ENCODE measurements at regions of chr16 and their contacts with region 1.

Region 1: GRCh38 chr16:5347561-5347960 is 250.0 kb upstream of the EEF2KMT start:
- DNase-seq: no peak
- ATAC-seq: no peak
- H3K4me3 ChIP-seq: no peak overlapping the region
- H3K27ac ChIP-seq: no peak overlapping the region
- H3K4me1 ChIP-seq: no peaks in the 10 kb centered on the region
- H3K27me3 ChIP-seq: peaks cover 0 to 2% (median 0%) of the 10 kb centered on the region in 7 donors
- CTCF ChIP-seq: no peak

Region 2: GRCh38 chr16:5071681-5072333 is 275.8 kb before region 1 on chr16 and contains the start of gene ALG1:
- intact Hi-C with region 1: no loop called
- DNase-seq: peak; percentile 90 to 92
- ATAC-seq: peak; percentile 94 to 97 (median 96)
- H3K4me3 ChIP-seq: peak within 1 kb of the TSS; percentile 57 to 86 (median 76)
- H3K27ac ChIP-seq: peak within 1 kb of the TSS; percentile 6 to 93 (median 78)
- H3K4me1 ChIP-seq: peaks cover 0 to 20% (median 12%) of the 10 kb centered on the region in 9 donors
- H3K27me3 ChIP-seq: no peaks in the 10 kb centered on the region
- CTCF ChIP-seq: no peak
- total RNA-seq, gene ALG1: 4.9 to 13.7 (median 7.9) TPM

Region 3: DNA sequence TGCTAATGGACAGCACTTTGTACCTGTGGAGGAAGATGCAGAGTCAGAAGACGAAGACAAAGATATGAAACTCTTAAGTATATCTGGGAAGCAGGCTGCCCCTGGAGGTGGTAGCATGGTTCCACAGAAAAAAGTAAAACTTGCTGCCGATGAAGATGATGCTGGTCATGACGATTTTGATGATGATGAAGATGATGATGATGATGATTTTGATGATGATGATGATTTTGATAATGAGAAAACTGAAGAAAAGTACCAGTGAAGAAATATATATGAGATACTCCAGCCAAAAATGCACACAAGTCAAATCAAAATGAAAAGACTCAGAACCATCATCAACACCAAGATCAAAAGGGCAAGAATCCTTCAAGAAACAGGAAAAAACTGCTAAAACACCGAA is 18.6 kb after region 1 on chr16:
- intact Hi-C with region 1: loop called in 1 of 10 experiments (anchors 1 kb)
- DNase-seq: no peak
- ATAC-seq: no peak
- H3K4me3 ChIP-seq: no peak overlapping the region
- H3K27ac ChIP-seq: no peak overlapping the region
- H3K4me1 ChIP-seq: no peaks in the 10 kb centered on the region
- H3K27me3 ChIP-seq: peaks cover 0 to 7% (median 0%) of the 10 kb centered on the region in 7 donors
- CTCF ChIP-seq: no peak

Measured in heart right ventricle (tissue), 16 donors.